ENCODE measurements at regions of chr2 and their contacts with region 1.

Region 1: GRCh38 chr2:237512774-237513466 is 25.9 kb downstream of the MLPH start:
- DNase-seq: peak; percentile 83 to 84
- H3K4me3 ChIP-seq: no peak overlapping the region
- H3K4me3 Mint-ChIP-seq: no peak overlapping the region
- H3K27ac Mint-ChIP-seq: no peak overlapping the region
- H3K4me1 ChIP-seq: no peaks in the 10 kb centered on the region
- H3K4me1 Mint-ChIP-seq: no peaks in the 10 kb centered on the region
- H3K27me3 ChIP-seq: no peaks in the 10 kb centered on the region
- H3K27me3 Mint-ChIP-seq: no peaks in the 10 kb centered on the region
- CTCF ChIP-seq: peak; percentile 88 to 89

Region 2: GRCh38 chr2:237474931-237475703 is 37.8 kb before region 1 on chr2:
- CTCF ChIA-PET with region 1: interaction called, 15 read pairs
- POLR2A ChIA-PET with region 1: no interaction called
- intact Hi-C with region 1: loop called (anchors 5 kb)
- DNase-seq: peak; percentile 82 to 83
- H3K4me3 ChIP-seq: peak overlapping the region; percentile 35
- H3K4me3 Mint-ChIP-seq: peak overlapping the region; percentile 82
- H3K27ac Mint-ChIP-seq: peak overlapping the region; percentile 57
- H3K4me1 ChIP-seq: 0 out of 2 replicates have a peak, but pooled peaks cover 7% of the 10 kb centered on the region
- H3K4me1 Mint-ChIP-seq: no peaks in the 10 kb centered on the region
- H3K27me3 ChIP-seq: no peaks in the 10 kb centered on the region
- H3K27me3 Mint-ChIP-seq: peaks cover 3% of the 10 kb centered on the region
- CTCF ChIP-seq: peak; percentile 63 to 73

Region 3: DNA sequence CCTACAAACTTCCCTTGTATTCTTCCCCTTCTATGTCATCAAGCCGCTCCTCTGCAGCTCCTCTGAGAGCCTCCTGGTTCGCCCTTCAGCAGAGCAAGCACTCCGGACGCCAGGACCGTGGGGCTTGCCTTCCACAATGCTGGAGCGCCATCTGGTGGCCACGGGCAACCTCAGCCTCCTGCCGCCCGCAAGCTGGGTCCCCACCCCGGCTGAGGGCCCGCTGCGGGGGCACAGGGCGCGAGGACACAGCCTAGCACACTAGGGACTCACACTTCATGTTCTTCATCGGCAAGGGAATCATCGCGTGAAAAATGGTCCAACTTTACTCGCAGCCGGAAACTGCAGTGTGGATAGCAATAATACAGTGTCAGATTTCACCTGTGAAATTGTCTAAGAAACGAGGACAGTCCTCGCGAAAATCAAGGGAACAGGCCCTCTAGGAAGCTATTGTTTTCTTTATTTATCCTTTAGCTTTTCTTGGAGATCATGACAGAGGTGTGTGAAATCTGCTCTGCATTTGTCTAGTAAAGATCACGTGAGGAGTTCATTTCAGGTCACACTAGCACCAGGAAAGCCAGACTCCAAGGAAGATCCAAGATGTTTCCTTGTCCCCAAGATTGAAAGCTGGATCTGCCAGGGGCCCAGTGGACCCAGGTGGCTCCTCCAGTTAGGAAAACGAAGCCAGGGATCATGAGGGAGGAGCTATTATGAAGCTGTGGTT is 59.3 kb after region 1 on chr2:
- CTCF ChIA-PET with region 1: interaction called, 131 read pairs
- POLR2A ChIA-PET with region 1: no interaction called
- intact Hi-C with region 1: loop called (anchors 1 kb)
- DNase-seq: peak; percentile 82 to 86
- H3K4me3 ChIP-seq: no peak overlapping the region
- H3K4me3 Mint-ChIP-seq: no peak overlapping the region
- H3K27ac Mint-ChIP-seq: peak overlapping the region; percentile 25
- H3K4me1 ChIP-seq: no peaks in the 10 kb centered on the region
- H3K4me1 Mint-ChIP-seq: peaks cover 8% of the 10 kb centered on the region
- H3K27me3 ChIP-seq: no peaks in the 10 kb centered on the region
- H3K27me3 Mint-ChIP-seq: no peaks in the 10 kb centered on the region
- CTCF ChIP-seq: peak; percentile 79 to 90

Region 4: GRCh38 chr2:237714690-237715458 is 202.0 kb after region 1 on chr2:
- CTCF ChIA-PET with region 1: interaction called, 10 read pairs
- POLR2A ChIA-PET with region 1: no interaction called
- intact Hi-C with region 1: no loop called
- DNase-seq: peak; percentile 32 to 52
- H3K4me3 ChIP-seq: peak overlapping the region; percentile 43
- H3K4me3 Mint-ChIP-seq: peak overlapping the region; percentile 78
- H3K27ac Mint-ChIP-seq: peak overlapping the region; percentile 84
- H3K4me1 ChIP-seq: peaks cover 19% of the 10 kb centered on the region; the same call in 1 of the 2 replicates
- H3K4me1 Mint-ChIP-seq: peaks cover 19% of the 10 kb centered on the region
- H3K27me3 ChIP-seq: no peaks in the 10 kb centered on the region
- H3K27me3 Mint-ChIP-seq: no peaks in the 10 kb centered on the region
- CTCF ChIP-seq: no peak

Region 5: GRCh38 chr2:237774802-237775553 is 262.1 kb after region 1 on chr2:
- CTCF ChIA-PET with region 1: interaction called, 13 read pairs
- POLR2A ChIA-PET with region 1: no interaction called
- intact Hi-C with region 1: loop called (anchors 1 kb)
- DNase-seq: peak; percentile 60 to 61
- H3K4me3 ChIP-seq: no peak overlapping the region
- H3K4me3 Mint-ChIP-seq: no peak overlapping the region
- H3K27ac Mint-ChIP-seq: no peak overlapping the region
- H3K4me1 ChIP-seq: no peaks in the 10 kb centered on the region
- H3K4me1 Mint-ChIP-seq: no peaks in the 10 kb centered on the region
- H3K27me3 ChIP-seq: no peaks in the 10 kb centered on the region
- H3K27me3 Mint-ChIP-seq: no peaks in the 10 kb centered on the region
- CTCF ChIP-seq: peak; percentile 54 to 56

Measured in Caco-2 (cell line).